ENCODE measurements at regions of chr3 and their contacts with region 1.

Region 1: GRCh38 chr3:96863129-96863740 is 48.8 kb downstream of the EPHA6 start:
- DNase-seq: peak; percentile 16 to 56 (median 28)
- H3K4me3 ChIP-seq: no peak overlapping the region
- H3K27ac ChIP-seq: no peak overlapping the region
- H3K4me1 ChIP-seq: no peaks in the 10 kb centered on the region
- H3K27me3 ChIP-seq: no peaks in the 10 kb centered on the region
- CTCF ChIP-seq: peak in 5 of 6 experiments; percentile 20 to 57 (median 53)
- POLR2A ChIP-seq: no peak

Region 2: GRCh38 chr3:96958856-96959255 is 95.6 kb after region 1 on chr3:
- intact Hi-C with region 1: no loop called
- DNase-seq: no peak
- H3K4me3 ChIP-seq: no peak overlapping the region
- H3K27ac ChIP-seq: no peak overlapping the region
- H3K4me1 ChIP-seq: no peaks in the 10 kb centered on the region
- H3K27me3 ChIP-seq: no peaks in the 10 kb centered on the region
- CTCF ChIP-seq: no peak
- POLR2A ChIP-seq: no peak

Region 3: GRCh38 chr3:97230486-97230885 is 367.3 kb after region 1 on chr3:
- intact Hi-C with region 1: no loop called
- DNase-seq: no peak
- H3K4me3 ChIP-seq: no peak overlapping the region
- H3K27ac ChIP-seq: no peak overlapping the region
- H3K4me1 ChIP-seq: no peaks in the 10 kb centered on the region
- H3K27me3 ChIP-seq: no peaks in the 10 kb centered on the region
- CTCF ChIP-seq: no peak
- POLR2A ChIP-seq: no peak

Region 4: DNA sequence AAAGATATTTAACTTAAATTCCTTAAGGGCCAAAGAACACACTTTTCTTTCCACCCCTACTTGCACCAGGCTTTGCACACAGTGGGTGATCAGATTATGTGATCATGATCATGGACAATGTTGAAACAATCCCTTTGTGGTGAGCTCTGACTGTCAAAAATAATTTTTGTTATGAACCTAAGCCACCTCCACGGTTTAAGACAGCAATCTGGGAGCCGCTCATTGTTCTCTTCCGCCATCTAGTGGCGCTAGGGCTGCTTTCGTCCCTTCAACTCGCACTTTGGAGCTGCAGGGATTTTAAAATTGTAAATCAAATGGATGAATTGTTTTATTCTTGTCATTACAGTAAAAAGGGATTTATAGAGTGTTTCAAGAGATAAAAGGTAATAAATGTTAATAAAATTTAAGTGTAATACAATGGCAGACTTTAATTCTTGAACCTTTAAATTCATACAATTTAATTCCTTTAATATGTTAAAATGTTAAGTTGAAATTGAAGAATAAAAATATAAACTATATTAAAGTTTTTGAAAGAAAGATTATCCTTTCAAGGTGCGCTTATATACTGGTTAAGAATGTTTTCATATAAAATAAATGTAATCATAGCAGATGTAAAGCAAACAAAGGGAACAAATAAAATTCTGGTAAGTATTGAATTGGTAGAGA is 856.1 kb after region 1 on chr3:
- intact Hi-C with region 1: loop called in 1 of 2 experiments (anchors 10 kb)
- DNase-seq: peak; percentile 58 to 82 (median 71)
- H3K4me3 ChIP-seq: peak overlapping the region in 1 of 4 donors; percentile 18
- H3K27ac ChIP-seq: no peak overlapping the region
- H3K4me1 ChIP-seq: no peaks in the 10 kb centered on the region
- H3K27me3 ChIP-seq: no peaks in the 10 kb centered on the region
- CTCF ChIP-seq: peak; percentile 65 to 90 (median 72)
- POLR2A ChIP-seq: no peak

Measured in adrenal gland (tissue), 19 donors.